ENCODE measurements at regions of chr20 and their contacts with region 1.

Region 1: GRCh38 chr20:52389606-52390005 is 198.0 kb upstream of the ZFP64 start:
- DNase-seq: no peak
- ATAC-seq: no peak
- H3K4me3 ChIP-seq: no peak overlapping the region
- H3K4me3 Mint-ChIP-seq: no peak overlapping the region
- H3K27ac ChIP-seq: no peak overlapping the region
- H3K27ac Mint-ChIP-seq: no peak overlapping the region
- H3K4me1 ChIP-seq: no peaks in the 10 kb centered on the region
- H3K4me1 Mint-ChIP-seq: no peaks in the 10 kb centered on the region
- H3K27me3 ChIP-seq: no peaks in the 10 kb centered on the region
- H3K27me3 Mint-ChIP-seq: peaks cover 3% of the 10 kb centered on the region
- CTCF ChIP-seq: no peak

Region 2: GRCh38 chr20:52191132-52191915 is 198.3 kb before region 1 on chr20 and contains the start of gene ZFP64:
- CTCF ChIA-PET with region 1: no interaction called
- POLR2A ChIA-PET with region 1: no interaction called
- intact Hi-C with region 1: loop called in 1 of 2 experiments (anchors 5 kb)
- DNase-seq: peak; percentile 42 to 88 (median 73)
- ATAC-seq: peak; percentile 79
- H3K4me3 ChIP-seq: peak within 1 kb of the TSS; percentile 67 to 93
- H3K4me3 Mint-ChIP-seq: peak within 1 kb of the TSS; percentile 92
- H3K27ac ChIP-seq: peak within 1 kb of the TSS; percentile 73 to 84
- H3K27ac Mint-ChIP-seq: peak within 1 kb of the TSS; percentile 94
- H3K4me1 ChIP-seq: peaks cover 16% of the 10 kb centered on the region
- H3K4me1 Mint-ChIP-seq: peaks cover 20% of the 10 kb centered on the region
- H3K27me3 ChIP-seq: no peaks in the 10 kb centered on the region
- H3K27me3 Mint-ChIP-seq: no peaks in the 10 kb centered on the region
- CTCF ChIP-seq: peak; percentile 57
- total RNA-seq, gene ZFP64: 2.4 to 2.7 TPM

Measured in CD8-positive, alpha-beta T cell (primary cell).